Naive thymus-derived CD8-positive, alpha-beta T cell (primary cell): ENCODE measurements at regions of chr17 and their contacts with region 1.

Region 1: DNA sequence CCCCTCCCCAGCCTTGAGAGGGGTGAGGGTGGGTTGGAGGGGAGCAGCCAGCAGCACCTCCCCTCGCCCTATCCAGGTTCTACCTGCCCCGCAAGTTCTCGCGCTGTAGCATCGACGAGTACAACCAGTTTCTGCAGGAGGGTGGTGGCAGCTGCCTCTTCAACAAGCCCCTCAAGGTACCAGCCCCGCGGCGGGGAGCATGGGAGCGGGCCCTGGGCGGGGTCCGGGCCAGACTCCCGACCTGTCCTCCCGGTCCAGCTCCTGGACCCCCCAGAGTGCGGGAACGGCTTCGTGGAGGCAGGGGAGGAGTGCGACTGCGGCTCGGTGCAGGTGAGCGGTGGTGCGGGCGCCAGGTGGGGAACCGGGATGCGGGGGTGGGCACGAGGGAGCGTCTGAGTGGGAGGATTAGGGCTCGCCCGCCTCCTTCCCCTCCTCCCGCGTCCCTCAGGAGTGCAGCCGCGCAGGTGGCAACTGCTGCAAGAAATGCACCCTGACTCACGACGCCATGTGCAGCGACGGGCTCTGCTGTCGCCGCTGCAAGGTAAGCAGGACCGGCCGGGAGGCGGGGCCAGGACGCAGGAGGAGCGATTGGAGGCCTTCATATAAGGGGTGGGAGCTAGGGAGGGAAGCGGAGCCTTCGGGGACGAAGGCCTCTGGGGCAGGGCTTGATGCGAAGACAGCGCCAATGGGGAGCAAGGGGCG is 16.5 kb downstream of the ADAM11 start:
- DNase-seq: peak in 7 of 10 donors; percentile 90 to 98 (median 95)
- ATAC-seq: peak; percentile 94
- H3K4me3 Mint-ChIP-seq: peak overlapping the region; percentile 88 to 95 (median 90)
- H3K27ac Mint-ChIP-seq: peak overlapping the region in 9 of 10 donors; percentile 46 to 92 (median 84)
- H3K4me1 Mint-ChIP-seq: peaks cover 0 to 23% (median 19%) of the 10 kb centered on the region in 4 donors
- H3K27me3 Mint-ChIP-seq: peaks cover 0 to 11% (median 0%) of the 10 kb centered on the region in 5 donors

Region 2: GRCh38 chr17:44899069-44899782 is 123.9 kb after region 1 on chr17 and contains the start of gene EFTUD2:
- POLR2A ChIA-PET with region 1: interaction called, 12 read pairs
- DNase-seq: peak; percentile 88 to 100 (median 94)
- ATAC-seq: peak; percentile 91 to 92
- H3K4me3 Mint-ChIP-seq: peak within 1 kb of the TSS; percentile 85 to 98 (median 96)
- H3K27ac Mint-ChIP-seq: peak within 1 kb of the TSS; percentile 98 to 100 (median 100)
- H3K4me1 Mint-ChIP-seq: peaks cover 11 to 37% (median 35%) of the 10 kb centered on the region in 4 donors
- H3K27me3 Mint-ChIP-seq: peaks cover 0 to 6% (median 0%) of the 10 kb centered on the region in 5 donors
- polyA plus RNA-seq, gene EFTUD2: 57.0 to 79.0 (median 68.3) TPM